WTC11 (cell line): ENCODE measurements at regions of chr3 and their contacts with region 1.

Region 1: GRCh38 chr3:113019182-113020137 is 28.7 kb downstream of the GTPBP8 start:
- DNase-seq: peak; percentile 85
- ATAC-seq: peak; percentile 95
- H3K4me3 Mint-ChIP-seq: peak overlapping the region; percentile 84
- H3K27ac Mint-ChIP-seq: peak overlapping the region; percentile 94
- H3K4me1 Mint-ChIP-seq: peaks cover 22% of the 10 kb centered on the region
- H3K27me3 Mint-ChIP-seq: peaks cover 11% of the 10 kb centered on the region
- CTCF ChIP-seq: no peak

Region 2: DNA sequence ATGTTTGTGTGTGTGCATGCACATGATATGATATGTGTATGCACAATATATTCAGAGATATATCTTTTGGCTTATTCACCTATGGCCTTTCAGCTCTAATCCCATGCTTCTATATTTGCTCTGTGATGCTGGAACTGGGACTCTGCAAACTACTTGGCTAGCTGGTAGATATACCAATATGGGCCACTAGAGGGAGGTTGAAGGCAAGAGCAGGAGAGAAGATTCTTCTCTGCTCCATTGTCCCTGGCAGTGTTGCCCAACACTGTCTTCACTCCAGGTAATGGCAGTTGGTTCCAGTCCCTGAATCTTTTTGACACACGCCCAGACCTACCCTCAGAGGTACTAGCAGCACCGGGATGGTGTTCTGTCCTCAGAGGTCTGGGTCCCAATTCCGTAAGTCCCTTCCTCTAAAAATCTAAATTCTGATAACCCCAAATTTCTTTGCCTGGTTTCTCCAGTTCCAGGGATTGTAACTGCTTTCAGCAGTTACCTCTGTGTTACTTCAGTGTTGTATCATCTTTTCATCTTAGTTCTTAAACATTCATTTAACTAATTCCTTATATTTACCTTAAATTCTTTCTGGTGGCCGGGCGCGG is 16.0 kb after region 1 on chr3:
- CTCF ChIA-PET with region 1: interaction called, 11 read pairs
- POLR2A ChIA-PET with region 1: no interaction called
- DNase-seq: peak; percentile 33
- ATAC-seq: peak; percentile 99
- H3K4me3 Mint-ChIP-seq: no peak overlapping the region
- H3K27ac Mint-ChIP-seq: no peak overlapping the region
- H3K4me1 Mint-ChIP-seq: 0 out of 2 replicates have a peak, but pooled peaks cover 3% of the 10 kb centered on the region
- H3K27me3 Mint-ChIP-seq: no peaks in the 10 kb centered on the region
- CTCF ChIP-seq: peak; percentile 93

Region 3: GRCh38 chr3:113211330-113212149 is 192.1 kb after region 1 on chr3 and contains the start of gene BOC:
- CTCF ChIA-PET with region 1: interaction called, 10 read pairs
- POLR2A ChIA-PET with region 1: no interaction called
- DNase-seq: peak; percentile 43
- ATAC-seq: peak; percentile 55
- H3K4me3 Mint-ChIP-seq: peak within 1 kb of the TSS; percentile 85
- H3K27ac Mint-ChIP-seq: peak within 1 kb of the TSS; percentile 77; the same call in 1 of the 2 replicates
- H3K4me1 Mint-ChIP-seq: peaks cover 37% of the 10 kb centered on the region
- H3K27me3 Mint-ChIP-seq: peaks cover 28% of the 10 kb centered on the region
- CTCF ChIP-seq: no peak
- total RNA-seq, gene BOC: 6.6 to 8.0 TPM (median 7.2 TPM) in 3 replicates